CD8-positive, alpha-beta T cell (primary cell): ENCODE measurements at regions of chr11 and their contacts with region 1.

Region 1: DNA sequence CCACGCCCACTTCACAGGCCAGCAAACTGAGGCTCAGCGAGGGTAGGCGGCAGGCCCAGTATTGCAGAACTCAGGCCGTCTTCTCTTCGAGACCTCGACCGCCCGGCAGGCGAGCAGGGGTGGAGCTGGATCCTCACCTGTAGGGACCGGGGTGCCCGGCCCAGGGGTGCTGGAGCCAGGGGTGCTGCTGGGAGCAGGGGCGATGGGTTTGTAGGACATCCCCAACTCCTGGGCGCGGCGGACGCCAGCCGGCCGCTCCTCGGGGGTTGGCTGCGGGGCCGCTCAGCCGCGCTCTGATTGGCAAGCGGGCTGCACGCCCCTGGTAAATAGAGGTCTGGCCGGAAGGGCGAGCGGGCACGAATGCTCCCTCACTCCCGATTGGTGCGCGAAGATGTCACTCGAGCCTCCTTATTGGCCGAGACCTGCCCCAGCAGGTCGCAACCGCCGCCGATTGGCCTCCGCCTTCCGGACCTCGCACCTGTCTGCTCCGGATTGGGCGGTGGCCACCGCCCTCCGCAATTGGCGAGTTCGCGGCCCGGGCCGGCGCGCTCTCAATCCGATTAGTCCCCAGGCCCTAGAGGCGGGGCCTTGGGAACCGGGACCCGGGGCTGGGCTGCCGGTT is at the start of gene CDK2AP2:
- DNase-seq: peak; percentile 93 to 99 (median 97)
- ATAC-seq: peak; percentile 69
- H3K4me3 ChIP-seq: peak within 1 kb of the TSS; percentile 66 to 97
- H3K4me3 Mint-ChIP-seq: peak within 1 kb of the TSS; percentile 90
- H3K27ac ChIP-seq: peak within 1 kb of the TSS; percentile 97
- H3K27ac Mint-ChIP-seq: peak within 1 kb of the TSS; percentile 97
- H3K4me1 ChIP-seq: peaks cover 42% of the 10 kb centered on the region
- H3K4me1 Mint-ChIP-seq: peaks cover 38% of the 10 kb centered on the region
- H3K27me3 ChIP-seq: no peaks in the 10 kb centered on the region
- H3K27me3 Mint-ChIP-seq: peaks cover 6% of the 10 kb centered on the region
- CTCF ChIP-seq: no peak
- total RNA-seq, gene CDK2AP2: 19.4 to 24.4 TPM

Region 2: DNA sequence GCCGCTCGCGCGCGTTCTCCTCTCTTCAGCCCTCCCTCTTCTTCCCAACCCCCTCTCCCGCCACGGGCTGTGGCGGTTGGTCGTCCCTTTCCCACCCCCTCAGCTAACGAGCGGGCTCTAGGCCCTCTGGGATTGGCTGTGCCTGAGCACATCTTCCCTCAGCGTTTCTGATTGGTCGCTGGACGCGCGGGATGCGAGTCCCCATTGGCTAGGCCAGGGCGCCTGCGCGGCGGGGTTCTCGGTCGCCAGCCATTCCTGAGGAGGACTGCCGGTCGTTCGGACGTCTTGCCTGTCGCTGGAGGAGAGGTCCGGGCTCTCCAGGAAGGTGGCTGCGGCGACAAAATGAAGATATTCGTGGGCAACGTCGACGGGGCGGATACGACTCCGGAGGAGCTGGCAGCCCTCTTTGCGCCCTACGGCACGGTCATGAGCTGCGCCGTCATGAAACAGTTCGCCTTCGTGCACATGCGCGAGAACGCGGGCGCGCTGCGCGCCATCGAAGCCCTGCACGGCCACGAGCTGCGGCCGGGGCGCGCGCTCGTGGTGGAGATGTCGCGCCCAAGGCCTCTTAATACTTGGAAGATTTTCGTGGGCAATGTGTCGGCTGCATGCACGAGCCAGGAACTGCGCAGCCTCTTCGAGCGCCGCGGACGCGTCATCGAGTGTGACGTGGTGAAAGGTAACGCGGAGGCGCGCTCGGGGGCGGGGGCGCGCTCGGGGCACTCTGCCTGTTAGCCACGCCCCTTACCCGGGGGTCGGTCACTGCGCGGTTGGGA is 891.4 kb before region 1 on chr11 and contains the start of gene RBM14:
- CTCF ChIA-PET with region 1: no interaction called
- POLR2A ChIA-PET with region 1: no interaction called
- intact Hi-C with region 1: loop called in 1 of 2 experiments (anchors 10 kb)
- DNase-seq: peak; percentile 96 to 100 (median 98)
- ATAC-seq: peak; percentile 82
- H3K4me3 ChIP-seq: peak within 1 kb of the TSS; percentile 88 to 93
- H3K4me3 Mint-ChIP-seq: peak within 1 kb of the TSS; percentile 98
- H3K27ac ChIP-seq: peak within 1 kb of the TSS; percentile 94 to 99
- H3K27ac Mint-ChIP-seq: peak within 1 kb of the TSS; percentile 97
- H3K4me1 ChIP-seq: peaks cover 43% of the 10 kb centered on the region
- H3K4me1 Mint-ChIP-seq: peaks cover 38% of the 10 kb centered on the region
- H3K27me3 ChIP-seq: no peaks in the 10 kb centered on the region
- H3K27me3 Mint-ChIP-seq: no peaks in the 10 kb centered on the region
- CTCF ChIP-seq: no peak
- total RNA-seq, gene RBM14: 198 to 213 TPM

Region 3: GRCh38 chr11:67239783-67240575 is 268.0 kb before region 1 on chr11:
- CTCF ChIA-PET with region 1: no interaction called
- POLR2A ChIA-PET with region 1: no interaction called
- intact Hi-C with region 1: loop called in 1 of 2 experiments (anchors 2 kb)
- DNase-seq: peak; percentile 89 to 99 (median 95)
- ATAC-seq: peak; percentile 89
- H3K4me3 ChIP-seq: peak overlapping the region; percentile 87 to 98
- H3K4me3 Mint-ChIP-seq: peak overlapping the region; percentile 96
- H3K27ac ChIP-seq: peak overlapping the region; percentile 95 to 96
- H3K27ac Mint-ChIP-seq: peak overlapping the region; percentile 100
- H3K4me1 ChIP-seq: peaks cover 40% of the 10 kb centered on the region
- H3K4me1 Mint-ChIP-seq: peaks cover 56% of the 10 kb centered on the region
- H3K27me3 ChIP-seq: no peaks in the 10 kb centered on the region
- H3K27me3 Mint-ChIP-seq: no peaks in the 10 kb centered on the region
- CTCF ChIP-seq: no peak

Region 4: GRCh38 chr11:67401495-67402191 is 106.3 kb before region 1 on chr11 and contains the start of gene PPP1CA:
- CTCF ChIA-PET with region 1: interaction called, 8 read pairs
- POLR2A ChIA-PET with region 1: interaction called, 10 read pairs
- intact Hi-C with region 1: loop called (anchors 1 kb)
- DNase-seq: peak; percentile 86 to 98 (median 92)
- ATAC-seq: peak; percentile 78
- H3K4me3 ChIP-seq: peak within 1 kb of the TSS; percentile 88 to 98
- H3K4me3 Mint-ChIP-seq: peak within 1 kb of the TSS; percentile 95
- H3K27ac ChIP-seq: peak within 1 kb of the TSS; percentile 75 to 79
- H3K27ac Mint-ChIP-seq: peak within 1 kb of the TSS; percentile 85
- H3K4me1 ChIP-seq: peaks cover 75% of the 10 kb centered on the region
- H3K4me1 Mint-ChIP-seq: peaks cover 65% of the 10 kb centered on the region
- H3K27me3 ChIP-seq: no peaks in the 10 kb centered on the region
- H3K27me3 Mint-ChIP-seq: no peaks in the 10 kb centered on the region
- CTCF ChIP-seq: peak; percentile 52
- total RNA-seq, gene PPP1CA: 40.5 to 42.2 TPM

Region 5: DNA sequence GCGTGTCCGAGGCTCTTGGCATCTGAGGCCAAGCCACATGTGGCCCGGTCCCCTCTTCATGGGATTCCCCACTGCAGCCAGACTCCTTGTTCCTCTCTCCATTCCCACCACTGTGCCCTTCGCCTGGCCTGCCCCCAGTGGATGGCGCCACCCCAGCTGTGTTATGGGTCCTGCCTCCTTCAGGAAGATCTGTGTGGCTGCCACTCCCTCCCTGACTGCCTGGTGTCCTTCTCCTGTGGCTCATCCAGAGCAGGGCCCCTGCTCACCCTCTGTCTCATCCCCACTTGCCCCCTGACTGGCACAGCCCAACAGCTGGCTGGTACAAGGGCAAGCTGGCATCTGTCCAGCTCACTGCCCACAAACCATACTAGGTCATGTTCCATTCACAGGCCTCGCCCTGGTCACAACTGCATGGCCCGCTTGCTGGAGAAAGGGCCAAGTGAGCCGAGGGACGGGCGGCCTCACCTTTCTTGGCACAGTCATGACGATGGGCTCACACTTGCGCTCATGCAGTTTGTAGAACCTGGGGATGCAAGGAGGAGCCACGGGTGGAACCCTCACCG is 68.6 kb before region 1 on chr11:
- CTCF ChIA-PET with region 1: interaction called, 4 read pairs
- POLR2A ChIA-PET with region 1: interaction called, 5 read pairs
- intact Hi-C with region 1: loop called (anchors 1 to 2 kb)
- DNase-seq: peak in 3 of 9 experiments; percentile 32 to 65 (median 53)
- ATAC-seq: no peak
- H3K4me3 ChIP-seq: peak overlapping the region; percentile 77 to 98
- H3K4me3 Mint-ChIP-seq: peak overlapping the region; percentile 89
- H3K27ac ChIP-seq: peak overlapping the region; percentile 34 to 67
- H3K27ac Mint-ChIP-seq: peak overlapping the region; percentile 94
- H3K4me1 ChIP-seq: peaks cover 64% of the 10 kb centered on the region
- H3K4me1 Mint-ChIP-seq: peaks cover 60% of the 10 kb centered on the region
- H3K27me3 ChIP-seq: no peaks in the 10 kb centered on the region
- H3K27me3 Mint-ChIP-seq: no peaks in the 10 kb centered on the region
- CTCF ChIP-seq: no peak

Region 6: GRCh38 chr11:67458266-67458665 is 49.7 kb before region 1 on chr11:
- CTCF ChIA-PET with region 1: no interaction called
- POLR2A ChIA-PET with region 1: no interaction called
- intact Hi-C with region 1: no loop called
- DNase-seq: no peak
- ATAC-seq: no peak
- H3K4me3 ChIP-seq: no peak overlapping the region
- H3K4me3 Mint-ChIP-seq: no peak overlapping the region
- H3K27ac ChIP-seq: no peak overlapping the region
- H3K27ac Mint-ChIP-seq: no peak overlapping the region
- H3K4me1 ChIP-seq: no peaks in the 10 kb centered on the region
- H3K4me1 Mint-ChIP-seq: peaks cover 5% of the 10 kb centered on the region
- H3K27me3 ChIP-seq: no peaks in the 10 kb centered on the region
- H3K27me3 Mint-ChIP-seq: no peaks in the 10 kb centered on the region
- CTCF ChIP-seq: no peak

Region 7: GRCh38 chr11:67583247-67584204 is 75.6 kb after region 1 on chr11 and contains the start of gene GSTP1:
- CTCF ChIA-PET with region 1: no interaction called
- POLR2A ChIA-PET with region 1: interaction called, 3 read pairs
- intact Hi-C with region 1: loop called in 1 of 2 experiments (anchors 1 kb)
- DNase-seq: peak; percentile 42 to 90 (median 79)
- ATAC-seq: peak; percentile 86
- H3K4me3 ChIP-seq: peak within 1 kb of the TSS; percentile 61 to 69
- H3K4me3 Mint-ChIP-seq: peak within 1 kb of the TSS; percentile 88
- H3K27ac ChIP-seq: peak within 1 kb of the TSS; percentile 59 to 75
- H3K27ac Mint-ChIP-seq: peak within 1 kb of the TSS; percentile 85
- H3K4me1 ChIP-seq: peaks cover 24% of the 10 kb centered on the region
- H3K4me1 Mint-ChIP-seq: peaks cover 44% of the 10 kb centered on the region
- H3K27me3 ChIP-seq: no peaks in the 10 kb centered on the region
- H3K27me3 Mint-ChIP-seq: no peaks in the 10 kb centered on the region
- CTCF ChIP-seq: peak; percentile 48
- total RNA-seq, gene GSTP1: 56.8 to 56.9 TPM